HepG2 (cell line): ENCODE measurements at regions of chr17 and their contacts with region 1.

Region 1: DNA sequence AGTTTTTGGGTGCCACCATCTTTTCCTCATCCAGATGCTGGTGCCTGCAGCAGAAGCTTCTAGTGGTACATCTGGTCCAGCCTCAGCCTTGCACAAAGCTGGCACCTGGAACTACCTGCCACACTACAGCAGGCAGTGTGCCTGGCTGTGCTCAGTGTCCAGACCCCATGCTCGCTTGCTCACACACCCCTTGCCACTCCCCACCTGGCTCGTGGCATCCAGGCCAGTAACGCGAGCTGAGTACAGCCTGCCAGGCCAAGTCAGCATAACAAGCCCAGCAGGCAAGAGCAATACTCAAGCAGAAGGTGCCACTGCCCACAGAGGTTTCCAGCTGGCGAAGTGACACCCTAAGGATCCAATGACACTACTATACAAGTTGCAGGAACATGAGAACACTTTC is 29.7 kb upstream of the KIF2B start:
- DNase-seq: no peak
- ATAC-seq: no peak
- H3K4me3 ChIP-seq: no peak overlapping the region
- H3K27ac ChIP-seq: no peak overlapping the region
- H3K4me1 ChIP-seq: no peaks in the 10 kb centered on the region
- H3K27me3 ChIP-seq: no peaks in the 10 kb centered on the region
- CTCF ChIP-seq: no peak
- EP300 ChIP-seq: no peak
- POLR2A ChIP-seq: no peak
- RAD21 ChIP-seq: no peak

Region 2: GRCh38 chr17:53687324-53687723 is 105.7 kb before region 1 on chr17:
- CTCF ChIA-PET with region 1: no interaction called
- POLR2A ChIA-PET with region 1: no interaction called
- in situ Hi-C with region 1: loop called (anchors 25 kb)
- intact Hi-C with region 1: no loop called
- DNase-seq: no peak
- ATAC-seq: no peak
- H3K4me3 ChIP-seq: no peak overlapping the region
- H3K27ac ChIP-seq: no peak overlapping the region
- H3K4me1 ChIP-seq: no peaks in the 10 kb centered on the region
- H3K27me3 ChIP-seq: no peaks in the 10 kb centered on the region
- CTCF ChIP-seq: no peak
- EP300 ChIP-seq: no peak
- POLR2A ChIP-seq: no peak
- RAD21 ChIP-seq: no peak

Region 3: DNA sequence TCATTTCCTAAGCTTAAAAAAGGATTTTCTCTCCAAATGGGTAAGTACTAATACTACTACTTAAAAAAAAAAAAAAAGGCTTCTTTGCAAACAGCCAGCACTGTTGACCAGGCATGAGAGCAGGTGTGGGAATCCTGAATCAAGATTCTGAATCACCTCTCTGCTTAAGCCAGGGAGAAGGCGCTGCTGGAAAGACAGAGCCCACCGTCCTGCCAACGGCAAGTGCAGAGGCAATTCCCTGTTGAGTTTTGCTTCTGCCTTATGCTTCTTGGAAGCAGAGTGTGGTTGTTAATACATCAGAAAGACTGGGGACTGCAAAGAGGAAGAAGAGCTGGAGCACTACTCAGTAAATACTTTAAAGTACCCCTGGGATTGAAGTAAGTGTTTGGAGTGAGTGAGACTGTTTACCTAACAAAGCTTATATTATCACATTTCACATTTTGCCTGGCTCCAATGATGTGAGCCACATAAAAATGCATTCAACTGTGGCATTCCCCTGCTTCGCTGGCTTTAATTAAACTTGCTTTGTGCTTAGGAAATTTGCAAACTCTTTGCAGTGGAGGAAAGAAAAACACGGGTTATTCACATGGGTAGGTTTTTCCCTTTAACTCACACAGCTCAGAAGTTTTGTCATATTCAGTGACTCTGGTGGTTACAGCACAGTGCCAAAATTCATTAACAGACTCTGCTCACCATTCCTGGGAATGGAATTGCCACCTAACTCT is 56.3 kb before region 1 on chr17:
- CTCF ChIA-PET with region 1: no interaction called
- POLR2A ChIA-PET with region 1: no interaction called
- in situ Hi-C with region 1: no loop called
- intact Hi-C with region 1: no loop called
- DNase-seq: no peak
- ATAC-seq: no peak
- H3K4me3 ChIP-seq: no peak overlapping the region
- H3K27ac ChIP-seq: no peak overlapping the region
- H3K4me1 ChIP-seq: 0 out of 2 replicates have a peak, but pooled peaks cover 5% of the 10 kb centered on the region
- H3K27me3 ChIP-seq: no peaks in the 10 kb centered on the region; a peak in 1 of 5 replicates
- CTCF ChIP-seq: no peak
- EP300 ChIP-seq: no peak
- POLR2A ChIP-seq: no peak
- RAD21 ChIP-seq: no peak

Region 4: DNA sequence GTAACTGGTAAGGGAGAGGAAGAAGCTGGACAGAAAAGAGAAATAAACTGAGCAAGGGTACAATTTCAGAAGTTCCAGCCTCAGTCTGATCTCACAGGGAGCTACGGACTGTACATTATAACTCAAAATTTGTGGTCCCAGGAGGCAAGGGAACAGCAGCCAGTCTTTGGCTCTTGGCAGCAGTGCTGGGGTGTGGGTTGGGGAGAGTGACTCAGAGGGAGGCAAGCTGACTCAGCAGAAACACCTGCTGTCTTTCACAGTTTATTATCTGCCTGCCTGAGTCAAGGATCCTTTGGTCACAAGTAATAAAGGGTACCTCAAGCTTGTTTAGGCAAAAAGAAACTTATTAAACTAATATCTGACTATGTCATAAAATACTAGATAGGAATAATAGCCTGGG is 43.8 kb before region 1 on chr17:
- CTCF ChIA-PET with region 1: no interaction called
- POLR2A ChIA-PET with region 1: no interaction called
- in situ Hi-C with region 1: no loop called
- intact Hi-C with region 1: no loop called
- DNase-seq: no peak
- ATAC-seq: no peak
- H3K4me3 ChIP-seq: no peak overlapping the region
- H3K27ac ChIP-seq: no peak overlapping the region
- H3K4me1 ChIP-seq: no peaks in the 10 kb centered on the region
- H3K27me3 ChIP-seq: no peaks in the 10 kb centered on the region
- CTCF ChIP-seq: no peak
- EP300 ChIP-seq: no peak
- POLR2A ChIP-seq: no peak
- RAD21 ChIP-seq: no peak